PC-9 (cell line): ENCODE measurements at regions of chr6 and their contacts with region 1.

Region 1: DNA sequence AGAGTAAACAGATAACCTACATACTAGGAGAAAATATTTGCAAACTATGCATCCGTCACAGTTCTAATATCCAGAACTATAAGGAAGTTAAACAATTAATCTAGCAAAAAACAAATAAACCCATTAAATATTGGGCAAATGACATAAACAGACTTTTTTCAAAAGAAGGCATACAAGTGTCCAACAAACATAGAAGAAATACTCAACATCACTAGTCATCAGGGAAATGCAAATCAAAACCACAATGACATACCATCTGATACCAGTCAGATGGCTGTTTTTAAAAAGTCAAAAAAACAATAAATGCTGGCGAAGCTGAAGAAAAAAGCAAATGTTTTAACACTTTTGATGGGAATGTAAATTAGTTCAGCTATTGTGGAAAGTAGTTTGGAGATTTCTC is 1117.7 kb upstream of the MAP3K7 start:
- DNase-seq: peak in 1 of 2 experiments; percentile 81
- H3K4me3 ChIP-seq: no peak overlapping the region
- H3K27ac ChIP-seq: no peak overlapping the region
- H3K4me1 ChIP-seq: peaks cover 18% of the 10 kb centered on the region
- H3K27me3 ChIP-seq: no peaks in the 10 kb centered on the region
- CTCF ChIP-seq: no peak

Region 2: DNA sequence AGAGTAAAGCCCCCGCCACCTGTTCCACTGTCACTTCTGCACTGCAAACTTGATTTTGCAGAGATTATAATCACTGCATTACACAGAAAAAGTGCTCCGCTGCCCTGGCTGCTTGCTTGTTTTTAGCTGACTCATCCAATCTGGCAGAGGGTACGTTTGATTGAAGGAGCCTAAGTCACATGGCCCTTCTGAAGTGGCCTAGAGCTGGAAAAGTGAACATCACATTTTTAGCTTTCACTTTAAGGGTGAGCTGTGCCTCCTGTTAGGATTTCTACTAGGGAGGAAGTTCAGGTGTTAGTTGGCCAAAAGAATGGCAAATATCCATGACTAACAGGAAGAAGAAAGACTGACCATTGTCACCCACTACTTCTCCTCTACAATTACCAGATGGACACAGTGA is 228.6 kb before region 1 on chr6:
- CTCF ChIA-PET with region 1: no interaction called
- POLR2A ChIA-PET with region 1: no interaction called
- intact Hi-C with region 1: loop called (anchors 10 kb)
- DNase-seq: peak; percentile 39 to 45
- H3K4me3 ChIP-seq: no peak overlapping the region
- H3K27ac ChIP-seq: no peak overlapping the region
- H3K4me1 ChIP-seq: no peaks in the 10 kb centered on the region
- H3K27me3 ChIP-seq: no peaks in the 10 kb centered on the region
- CTCF ChIP-seq: no peak

Region 3: DNA sequence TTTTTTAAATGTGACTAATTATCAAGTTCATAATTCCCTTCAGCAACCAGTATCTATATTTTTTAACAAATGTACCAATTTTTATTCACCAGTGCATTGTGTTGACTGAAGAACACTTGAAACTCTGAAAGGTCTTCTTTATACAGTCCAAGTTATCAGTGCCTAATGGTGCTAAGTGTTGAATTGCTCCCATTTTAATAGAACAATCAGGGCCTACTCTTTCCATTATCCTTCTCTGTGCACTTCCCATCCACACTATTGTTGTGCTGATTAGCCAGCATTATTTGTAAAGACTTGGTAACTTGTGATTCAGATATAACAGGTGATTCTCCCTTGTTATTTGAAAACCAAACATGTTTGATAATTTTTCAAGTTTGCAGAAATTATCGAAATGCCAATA is 92.1 kb after region 1 on chr6:
- CTCF ChIA-PET with region 1: no interaction called
- POLR2A ChIA-PET with region 1: no interaction called
- intact Hi-C with region 1: no loop called
- DNase-seq: no peak
- H3K4me3 ChIP-seq: no peak overlapping the region
- H3K27ac ChIP-seq: no peak overlapping the region
- H3K4me1 ChIP-seq: no peaks in the 10 kb centered on the region
- H3K27me3 ChIP-seq: no peaks in the 10 kb centered on the region
- CTCF ChIP-seq: no peak

Region 4: GRCh38 chr6:92166666-92167065 is 462.1 kb after region 1 on chr6:
- CTCF ChIA-PET with region 1: no interaction called
- POLR2A ChIA-PET with region 1: no interaction called
- intact Hi-C with region 1: no loop called
- DNase-seq: no peak
- H3K4me3 ChIP-seq: no peak overlapping the region
- H3K27ac ChIP-seq: no peak overlapping the region
- H3K4me1 ChIP-seq: no peaks in the 10 kb centered on the region
- H3K27me3 ChIP-seq: no peaks in the 10 kb centered on the region
- CTCF ChIP-seq: no peak